ENCODE measurements at regions of chr11 and their contacts with region 1.

Region 1: DNA sequence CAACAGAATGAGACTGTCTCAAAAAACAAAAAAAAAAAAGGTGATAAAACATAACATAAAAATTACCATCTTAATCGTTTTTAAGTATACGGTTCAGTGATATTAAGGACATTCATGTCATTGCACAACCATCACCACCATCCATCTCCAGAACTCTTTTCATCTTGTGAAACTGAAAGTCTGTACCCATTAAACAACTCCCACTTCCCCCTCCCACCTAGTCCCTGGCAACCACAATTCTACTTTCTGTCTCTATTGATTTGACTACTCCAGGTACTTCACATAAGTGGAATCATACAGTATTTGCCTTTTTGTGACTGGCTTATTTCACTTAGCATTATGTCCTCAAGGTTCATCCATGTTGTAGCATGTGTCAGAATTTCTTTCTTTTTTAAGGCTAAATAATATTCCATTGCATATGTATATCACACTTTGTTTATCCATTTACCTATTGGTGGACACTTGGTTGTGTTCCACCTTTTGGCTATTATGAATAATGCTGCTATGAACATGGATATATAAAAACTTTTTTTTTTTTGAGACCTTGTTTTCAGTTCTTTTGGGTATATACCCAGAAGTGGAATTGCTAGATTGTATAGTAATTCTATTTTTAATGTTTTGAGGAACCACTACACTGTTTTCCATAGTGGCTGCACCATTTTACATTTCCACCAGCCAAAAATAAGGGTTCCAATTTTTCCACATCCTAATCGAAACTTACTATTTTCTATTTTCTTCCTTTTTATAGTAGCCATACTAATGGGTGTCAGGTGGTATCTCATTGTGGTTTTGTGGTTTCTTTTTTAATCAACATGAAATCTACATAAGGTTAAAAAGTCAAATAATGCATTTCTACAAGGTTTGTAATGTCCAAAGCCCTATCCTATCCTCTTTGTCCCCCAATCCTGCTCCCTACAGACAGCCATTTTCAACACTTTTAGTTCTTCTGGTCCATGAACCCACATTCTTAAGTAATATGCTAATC is 23.4 kb upstream of the PIK3C2A start:
- DNase-seq: peak; percentile 68
- ATAC-seq: peak; percentile 94
- H3K4me3 Mint-ChIP-seq: peak overlapping the region; percentile 50
- H3K27ac Mint-ChIP-seq: peak overlapping the region; percentile 39
- H3K4me1 Mint-ChIP-seq: peaks cover 18% of the 10 kb centered on the region
- H3K27me3 Mint-ChIP-seq: peaks cover 8% of the 10 kb centered on the region

Region 2: DNA sequence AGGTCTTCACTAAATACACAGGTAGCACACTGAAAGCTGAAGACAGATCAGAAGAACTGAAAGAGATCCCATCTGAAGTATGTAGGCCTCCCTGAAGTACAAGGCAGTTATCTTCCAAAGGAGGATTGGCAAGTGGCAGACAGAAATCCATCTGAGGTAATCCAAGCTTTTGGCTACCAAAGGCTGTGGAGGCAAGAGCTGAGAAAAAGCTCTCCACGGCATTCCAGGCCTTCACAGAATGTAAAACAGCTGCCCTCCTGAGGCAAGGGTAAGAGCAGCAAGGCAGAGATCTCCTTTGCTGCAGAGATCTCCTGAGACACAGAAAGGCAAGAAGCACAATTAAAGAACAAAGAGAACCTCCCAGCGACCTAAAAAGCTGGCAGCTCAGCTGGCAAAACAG is 42.5 kb before region 1 on chr11:
- CTCF ChIA-PET with region 1: no interaction called
- POLR2A ChIA-PET with region 1: no interaction called
- DNase-seq: no peak
- ATAC-seq: no peak
- H3K4me3 Mint-ChIP-seq: no peak overlapping the region
- H3K27ac Mint-ChIP-seq: no peak overlapping the region
- H3K4me1 Mint-ChIP-seq: no peaks in the 10 kb centered on the region
- H3K27me3 Mint-ChIP-seq: no peaks in the 10 kb centered on the region

Region 3: DNA sequence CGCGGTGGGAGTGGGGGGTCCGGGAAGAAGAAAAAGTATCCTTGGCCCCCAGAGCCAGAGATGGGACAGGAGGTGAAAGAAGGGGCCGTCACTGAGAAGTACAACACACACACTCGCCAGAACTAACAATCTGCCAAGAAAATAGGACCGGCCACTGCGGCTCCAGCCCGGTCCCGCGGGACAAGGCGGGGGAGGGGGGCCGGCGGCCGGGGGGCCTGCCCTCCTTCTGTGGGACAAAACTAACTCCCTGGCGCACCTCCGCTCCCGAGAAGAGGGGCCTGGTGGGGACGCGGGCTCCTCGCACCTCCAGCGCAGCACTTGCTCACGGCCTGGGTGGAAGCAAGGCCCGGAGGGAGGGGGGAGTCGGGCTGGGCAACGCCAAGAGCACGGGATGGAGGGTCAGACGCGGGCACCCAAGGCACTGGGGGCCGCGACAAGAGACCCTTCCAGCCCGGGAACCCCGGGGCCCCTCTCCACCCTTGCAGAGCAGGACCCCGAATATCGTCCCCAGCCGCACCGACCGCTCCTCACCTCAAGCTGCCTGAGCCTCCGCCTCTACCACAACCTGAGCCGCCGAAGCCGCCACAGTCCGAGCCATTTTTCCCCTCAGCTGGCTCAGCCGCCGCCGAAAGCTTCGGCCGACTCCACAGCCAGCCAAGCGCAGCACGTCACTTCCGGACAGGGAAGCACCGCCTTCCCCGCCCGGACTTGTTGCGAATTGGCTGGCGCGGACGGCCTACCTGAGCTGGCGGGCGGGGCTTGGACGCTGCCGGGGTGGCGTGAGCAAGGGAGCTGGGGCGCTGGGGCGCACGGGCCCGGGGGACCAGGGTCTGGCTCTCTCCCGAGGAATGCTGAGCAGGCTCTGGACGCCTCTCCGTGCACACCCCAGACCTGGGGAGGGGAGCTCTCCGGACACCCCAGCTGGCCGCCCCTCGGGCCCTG is 23.6 kb before region 1 on chr11 and contains the start of gene PIK3C2A:
- CTCF ChIA-PET with region 1: interaction called, 10 read pairs
- POLR2A ChIA-PET with region 1: interaction called, 4 read pairs
- DNase-seq: peak; percentile 97
- ATAC-seq: peak; percentile 98
- H3K4me3 Mint-ChIP-seq: peak within 1 kb of the TSS; percentile 99
- H3K27ac Mint-ChIP-seq: peak within 1 kb of the TSS; percentile 98
- H3K4me1 Mint-ChIP-seq: peaks cover 35% of the 10 kb centered on the region
- H3K27me3 Mint-ChIP-seq: no peaks in the 10 kb centered on the region
- total RNA-seq, gene PIK3C2A: 21.5 to 24.9 TPM

Region 4: GRCh38 chr11:17276236-17277023 is 45.3 kb after region 1 on chr11 and contains the start of gene NUCB2:
- CTCF ChIA-PET with region 1: interaction called, 30 read pairs
- POLR2A ChIA-PET with region 1: interaction called, 10 read pairs
- DNase-seq: peak; percentile 97
- ATAC-seq: peak; percentile 94
- H3K4me3 Mint-ChIP-seq: peak within 1 kb of the TSS; percentile 90
- H3K27ac Mint-ChIP-seq: peak within 1 kb of the TSS; percentile 95
- H3K4me1 Mint-ChIP-seq: peaks cover 59% of the 10 kb centered on the region
- H3K27me3 Mint-ChIP-seq: no peaks in the 10 kb centered on the region
- total RNA-seq, gene NUCB2: 187 to 210 TPM

Region 5: DNA sequence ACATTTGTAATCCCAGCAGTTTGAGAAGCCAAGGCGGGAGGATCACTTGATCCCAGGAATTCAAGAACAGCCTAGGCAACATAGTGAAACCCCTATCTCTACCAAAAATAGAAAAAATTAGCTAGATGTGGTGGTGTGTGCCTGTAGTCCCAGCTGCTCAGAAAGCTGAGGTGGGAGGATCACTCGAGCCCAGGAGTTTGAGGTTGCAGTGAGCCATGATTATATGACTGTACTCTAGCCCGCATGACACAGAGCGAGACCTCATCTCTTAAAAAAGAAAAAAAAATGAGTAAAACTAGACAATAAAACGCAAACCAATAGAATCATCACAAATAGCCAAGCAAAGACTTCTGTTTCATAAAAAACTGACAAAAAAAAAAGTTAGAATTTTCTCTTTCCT is 67.1 kb after region 1 on chr11:
- CTCF ChIA-PET with region 1: interaction called, 13 read pairs
- POLR2A ChIA-PET with region 1: no interaction called
- DNase-seq: no peak
- ATAC-seq: peak; percentile 44
- H3K4me3 Mint-ChIP-seq: no peak overlapping the region
- H3K27ac Mint-ChIP-seq: no peak overlapping the region
- H3K4me1 Mint-ChIP-seq: peaks cover 25% of the 10 kb centered on the region
- H3K27me3 Mint-ChIP-seq: no peaks in the 10 kb centered on the region

Region 6: GRCh38 chr11:17354601-17354991 is 123.4 kb after region 1 on chr11:
- CTCF ChIA-PET with region 1: interaction called, 14 read pairs
- POLR2A ChIA-PET with region 1: no interaction called
- DNase-seq: peak; percentile 85
- ATAC-seq: peak; percentile 23
- H3K4me3 Mint-ChIP-seq: peak overlapping the region; percentile 82
- H3K27ac Mint-ChIP-seq: no peak overlapping the region
- H3K4me1 Mint-ChIP-seq: peaks cover 37% of the 10 kb centered on the region
- H3K27me3 Mint-ChIP-seq: peaks cover 3% of the 10 kb centered on the region

Region 7: DNA sequence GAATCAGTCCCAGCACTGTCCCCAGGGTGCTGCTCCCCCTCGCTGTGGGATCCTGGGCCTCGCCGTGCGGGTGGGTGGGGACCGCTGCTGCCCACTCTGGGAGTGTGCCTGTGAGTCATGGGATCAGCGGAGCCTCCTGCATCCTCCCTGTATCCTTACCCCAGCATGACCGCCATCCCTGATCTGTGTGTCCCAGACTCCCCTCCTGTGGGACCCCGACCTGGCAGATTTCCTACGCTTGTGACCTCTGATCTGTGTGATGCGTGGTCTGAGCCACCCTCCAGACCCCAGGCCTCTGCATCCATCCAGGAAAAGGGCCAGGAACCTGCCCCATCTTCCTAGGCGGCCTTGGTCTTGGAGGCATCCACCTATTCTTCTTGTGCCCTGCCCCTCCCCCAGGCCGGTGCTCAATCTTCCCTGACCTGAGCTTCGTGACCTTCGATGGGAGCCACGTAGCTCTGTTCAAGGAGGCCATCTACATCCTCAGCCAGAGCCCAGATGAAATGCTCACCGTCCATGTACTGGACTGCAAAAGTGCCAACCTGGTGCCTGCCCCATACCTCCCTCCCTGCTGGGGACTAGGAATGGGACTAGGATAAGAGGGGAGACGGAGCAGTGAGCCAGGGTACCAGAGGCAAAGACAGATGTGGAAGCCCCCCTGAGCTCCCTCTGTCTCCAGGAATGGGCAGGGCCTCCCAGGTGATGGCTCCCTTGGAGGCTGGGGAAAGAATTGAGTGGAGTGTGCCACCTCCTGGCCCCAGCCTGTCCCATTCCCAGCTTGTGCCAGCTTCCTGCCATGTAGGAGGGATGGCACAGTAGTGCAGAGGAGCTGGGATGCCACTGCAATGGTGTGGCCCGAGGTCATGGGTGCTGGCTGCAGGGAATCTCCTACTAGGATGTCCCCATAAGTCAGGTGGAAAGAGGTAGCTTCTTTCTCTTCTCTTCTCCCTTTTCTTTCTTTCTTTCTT is 381.3 kb after region 1 on chr11:
- CTCF ChIA-PET with region 1: no interaction called
- POLR2A ChIA-PET with region 1: no interaction called
- DNase-seq: peak; percentile 13
- ATAC-seq: no peak
- H3K4me3 Mint-ChIP-seq: no peak overlapping the region
- H3K27ac Mint-ChIP-seq: no peak overlapping the region
- H3K4me1 Mint-ChIP-seq: no peaks in the 10 kb centered on the region
- H3K27me3 Mint-ChIP-seq: peaks cover 12% of the 10 kb centered on the region